Activated T-helper 1 cell treated with anti-CD3 and anti-CD28 coated beads, Interleukin-12 subunit alpha, Interleukin-12 subunit beta, Interleukin-2, Interleukin-4 antibody, amounts not matched to agents 30 ng/mL and 10 ng/mL and 1 ng/mL, durations not matched to agents 14 hours and 24 hours and 36 hours (primary cell): ENCODE measurements at regions of chr10 and their contacts with region 1.

Region 1: DNA sequence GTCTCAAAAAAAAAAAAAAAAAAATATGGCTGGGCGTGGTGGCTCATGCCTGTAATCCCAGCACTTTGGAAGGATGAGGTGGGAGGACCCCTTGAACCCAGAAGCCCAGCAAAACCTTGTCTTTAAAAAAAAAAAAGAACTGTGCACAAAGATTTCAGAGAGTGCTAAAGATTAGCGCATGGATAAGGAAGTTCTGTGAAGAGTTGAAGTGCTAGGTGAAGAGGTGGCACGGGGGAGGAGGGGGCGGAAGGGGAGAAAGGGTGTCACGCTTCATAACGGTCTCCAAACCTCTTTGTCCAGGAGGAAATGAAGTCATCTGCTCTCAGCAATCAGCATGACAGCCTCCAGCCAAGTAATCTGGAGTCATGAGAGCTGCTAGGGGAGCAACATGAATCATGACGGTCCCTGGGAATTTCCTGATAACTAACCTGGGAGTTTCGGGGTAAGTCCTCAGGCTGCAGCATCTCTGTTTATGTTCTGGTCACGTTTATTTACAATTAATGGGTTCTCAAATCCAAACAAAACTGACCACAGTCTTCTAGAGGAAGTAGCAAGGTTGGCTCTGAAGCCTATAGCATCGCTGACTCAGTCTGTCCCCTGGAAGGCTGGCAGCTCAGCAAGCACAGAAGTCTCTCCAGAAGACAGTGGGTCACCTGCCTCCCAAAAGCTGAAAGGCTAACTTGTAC is 1.9 kb upstream of the PLAU start:
- DNase-seq: peak; percentile 34
- H3K4me3 Mint-ChIP-seq: peak overlapping the region; percentile 45
- H3K27ac Mint-ChIP-seq: peak overlapping the region; percentile 56
- H3K4me1 Mint-ChIP-seq: peaks cover 46% of the 10 kb centered on the region
- H3K27me3 Mint-ChIP-seq: peaks cover 35% of the 10 kb centered on the region

Region 2: GRCh38 chr10:73920089-73920488 is 11.1 kb after region 1 on chr10:
- intact Hi-C with region 1: loop called (anchors 1 kb)
- DNase-seq: no peak
- H3K4me3 Mint-ChIP-seq: no peak overlapping the region
- H3K27ac Mint-ChIP-seq: no peak overlapping the region
- H3K4me1 Mint-ChIP-seq: peaks cover 27% of the 10 kb centered on the region
- H3K27me3 Mint-ChIP-seq: peaks cover 33% of the 10 kb centered on the region

Region 3: DNA sequence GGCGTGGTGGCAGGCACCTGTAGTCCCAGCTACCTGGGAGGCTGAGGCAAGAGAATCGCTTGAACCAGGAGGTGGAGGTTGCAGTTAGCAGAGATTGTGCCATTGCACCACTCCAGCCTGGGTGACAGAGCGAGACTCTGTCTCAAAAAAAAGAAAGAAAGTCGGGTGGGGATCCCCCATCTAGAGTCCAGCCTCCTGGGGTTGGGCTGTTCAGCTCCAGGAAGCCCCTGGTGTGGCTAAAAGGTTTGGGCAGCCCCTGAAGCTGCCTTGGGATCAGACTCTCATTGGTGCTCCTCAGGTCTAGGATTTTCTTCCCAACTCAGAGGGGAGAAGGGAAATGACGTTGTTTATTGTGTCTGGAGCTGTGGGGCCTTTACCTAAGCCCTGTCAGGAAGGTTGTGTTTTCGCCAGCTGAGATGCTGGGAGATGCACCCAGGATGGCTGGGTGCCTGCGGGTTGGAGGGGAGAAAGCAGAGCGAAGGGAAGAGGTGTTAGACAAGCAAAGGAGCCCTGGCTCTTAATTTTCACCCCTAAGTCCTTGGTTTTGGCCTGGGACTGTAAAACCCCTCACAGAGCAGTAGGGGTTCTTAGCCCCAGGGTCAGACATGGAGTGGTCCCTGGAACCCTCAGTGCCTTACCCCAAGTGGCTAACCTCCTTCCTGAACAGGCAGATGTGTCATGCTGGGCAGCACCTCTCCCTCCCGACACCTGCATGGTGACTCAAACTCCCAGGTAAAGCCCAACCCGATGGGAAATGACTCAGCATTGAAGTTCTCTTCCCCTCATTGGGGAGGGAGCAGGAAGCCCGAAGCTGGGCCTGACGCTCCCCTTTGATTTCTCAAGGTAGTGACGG is 23.0 kb after region 1 on chr10:
- intact Hi-C with region 1: loop called (anchors 2 kb)
- DNase-seq: peak; percentile 58
- H3K4me3 Mint-ChIP-seq: no peak overlapping the region
- H3K27ac Mint-ChIP-seq: peak overlapping the region; percentile 57
- H3K4me1 Mint-ChIP-seq: peaks cover 37% of the 10 kb centered on the region
- H3K27me3 Mint-ChIP-seq: peaks cover 23% of the 10 kb centered on the region

Region 4: DNA sequence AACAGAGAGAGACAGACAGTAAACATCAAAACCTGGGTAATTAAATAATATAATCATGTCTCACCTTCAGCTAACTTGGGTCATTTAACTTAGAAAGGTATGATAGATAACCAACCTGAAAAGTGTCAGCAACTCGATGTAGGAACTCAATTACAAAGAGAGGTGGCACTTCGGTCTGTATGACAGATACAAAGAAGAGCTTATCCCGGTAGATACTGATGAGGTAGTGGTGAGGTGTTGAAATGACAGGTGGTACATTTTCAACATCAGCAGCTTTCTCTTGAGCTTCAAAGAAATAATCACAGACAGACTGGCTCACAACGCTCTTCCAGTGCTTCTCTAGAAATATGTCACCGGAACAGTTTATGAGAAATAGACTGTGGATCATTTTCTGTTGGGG is 229.0 kb after region 1 on chr10:
- intact Hi-C with region 1: no loop called
- DNase-seq: no peak
- H3K4me3 Mint-ChIP-seq: no peak overlapping the region
- H3K27ac Mint-ChIP-seq: no peak overlapping the region
- H3K4me1 Mint-ChIP-seq: no peaks in the 10 kb centered on the region
- H3K27me3 Mint-ChIP-seq: no peaks in the 10 kb centered on the region